HepG2 (cell line): ENCODE measurements at regions of chr7 and their contacts with region 1.

Region 1: GRCh38 chr7:32515890-32516550 is 20.7 kb downstream of the AVL9 start:
- DNase-seq: peak; percentile 92
- ATAC-seq: peak; percentile 97
- H3K4me3 ChIP-seq: peak overlapping the region in 1 of 3 experiments; percentile 18; a peak in 1 of 6 replicates
- H3K27ac ChIP-seq: peak overlapping the region; percentile 79
- H3K4me1 ChIP-seq: peaks cover 56% of the 10 kb centered on the region
- H3K27me3 ChIP-seq: no peaks in the 10 kb centered on the region
- CTCF ChIP-seq: no peak
- EP300 ChIP-seq: peak in 1 of 2 experiments; percentile 52; a peak in 1 of 4 replicates
- POLR2A ChIP-seq: no peak
- RAD21 ChIP-seq: no peak

Region 2: GRCh38 chr7:32533276-32534029 is 17.4 kb after region 1 on chr7:
- CTCF ChIA-PET with region 1: no interaction called
- POLR2A ChIA-PET with region 1: no interaction called
- in situ Hi-C with region 1: no loop called
- intact Hi-C with region 1: loop called (anchors 1 kb)
- DNase-seq: no peak
- ATAC-seq: no peak
- H3K4me3 ChIP-seq: no peak overlapping the region
- H3K27ac ChIP-seq: no peak overlapping the region
- H3K4me1 ChIP-seq: no peaks in the 10 kb centered on the region
- H3K27me3 ChIP-seq: no peaks in the 10 kb centered on the region
- CTCF ChIP-seq: no peak
- EP300 ChIP-seq: no peak
- POLR2A ChIP-seq: no peak
- RAD21 ChIP-seq: no peak